Stomach (tissue), 19 donors: ENCODE measurements at regions of chr4 and their contacts with region 1.

Region 1: GRCh38 chr4:153127760-153128494 is 76.3 kb upstream of the TRIM2 start:
- DNase-seq: peak; percentile 92 to 95
- H3K4me3 ChIP-seq: peak overlapping the region in 2 of 4 donors; percentile 7 to 12
- H3K27ac ChIP-seq: no peak overlapping the region
- H3K4me1 ChIP-seq: peaks cover 4 to 8% (median 6%) of the 10 kb centered on the region in 4 donors
- H3K27me3 ChIP-seq: no peaks in the 10 kb centered on the region
- CTCF ChIP-seq: peak in 5 of 7 experiments; percentile 41 to 86 (median 80)
- EP300 ChIP-seq: no peak
- POLR2A ChIP-seq: no peak

Region 2: GRCh38 chr4:152843481-152844090 is 284.3 kb before region 1 on chr4:
- intact Hi-C with region 1: loop called (anchors 10 kb)
- DNase-seq: peak in 1 of 2 donors; percentile 62
- H3K4me3 ChIP-seq: no peak overlapping the region
- H3K27ac ChIP-seq: peak overlapping the region in 4 of 5 donors; percentile 2 to 32 (median 18)
- H3K4me1 ChIP-seq: peaks cover 0 to 16% (median 2%) of the 10 kb centered on the region in 4 donors
- H3K27me3 ChIP-seq: no peaks in the 10 kb centered on the region
- CTCF ChIP-seq: no peak
- EP300 ChIP-seq: no peak
- POLR2A ChIP-seq: no peak

Region 3: GRCh38 chr4:153083447-153083947 is 44.4 kb before region 1 on chr4:
- intact Hi-C with region 1: loop called (anchors 5 kb)
- DNase-seq: peak; percentile 69 to 93
- H3K4me3 ChIP-seq: no peak overlapping the region
- H3K27ac ChIP-seq: peak overlapping the region in 1 of 5 donors; percentile 38
- H3K4me1 ChIP-seq: peaks cover 8 to 21% (median 15%) of the 10 kb centered on the region in 4 donors
- H3K27me3 ChIP-seq: no peaks in the 10 kb centered on the region
- CTCF ChIP-seq: peak in 5 of 7 experiments; percentile 28 to 72 (median 57)
- EP300 ChIP-seq: no peak
- POLR2A ChIP-seq: no peak